Lower leg skin (tissue), 4 donors: ENCODE measurements at regions of chr18 and their contacts with region 1.

Region 1: GRCh38 chr18:33839441-33840211 is 261.6 kb downstream of the ASXL3 start:
- DNase-seq: no peak
- H3K4me3 ChIP-seq: no peak overlapping the region
- CTCF ChIP-seq: no peak
- POLR2A ChIP-seq: no peak

Region 2: GRCh38 chr18:33866386-33866785 is 26.8 kb after region 1 on chr18:
- intact Hi-C with region 1: loop called (anchors 1 kb)
- DNase-seq: no peak
- H3K4me3 ChIP-seq: no peak overlapping the region
- CTCF ChIP-seq: no peak
- POLR2A ChIP-seq: no peak